ENCODE measurements at regions of chr17 and their contacts with region 1.

Region 1: DNA sequence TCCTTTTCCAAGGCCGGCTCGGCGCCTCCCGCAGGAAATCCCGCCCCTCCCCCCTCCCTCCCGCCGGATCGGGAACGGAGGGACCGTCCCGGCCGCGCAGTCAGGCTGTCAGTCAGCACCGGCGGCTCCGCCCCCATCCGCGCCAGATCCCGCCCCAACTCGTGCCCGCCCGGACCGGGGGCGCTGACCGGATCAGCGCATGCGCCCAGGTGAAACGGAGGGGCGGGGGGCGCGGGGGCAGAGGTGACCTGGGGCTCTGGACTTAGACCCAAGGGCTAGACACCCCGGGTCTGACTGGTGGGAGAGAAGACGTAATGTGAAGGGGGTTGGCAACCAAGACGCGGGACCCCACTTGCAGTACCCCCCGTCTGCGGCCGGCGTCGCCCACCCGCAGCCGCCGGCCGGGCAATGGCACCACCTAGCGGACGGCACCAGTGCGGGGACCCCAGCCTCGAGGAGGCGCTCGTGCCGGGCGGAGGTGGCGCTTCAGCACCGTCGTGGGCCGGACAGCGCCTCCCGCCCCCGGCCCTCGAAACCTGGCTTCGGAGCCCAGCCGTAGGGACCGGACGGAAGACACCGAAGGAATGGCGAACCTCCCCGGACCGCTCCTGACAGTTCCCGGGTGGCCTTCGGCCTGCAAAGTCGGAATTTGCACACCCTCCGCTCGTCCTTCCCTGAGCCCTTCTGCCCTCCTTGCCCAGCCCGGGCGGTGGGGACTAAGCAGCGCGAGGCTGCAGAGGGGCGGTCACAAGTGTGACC is at the start of gene CASKIN2:
- DNase-seq: peak; percentile 83
- ATAC-seq: peak; percentile 54
- H3K4me3 Mint-ChIP-seq: peak within 1 kb of the TSS; percentile 76
- H3K27ac Mint-ChIP-seq: peak within 1 kb of the TSS; percentile 52
- H3K4me1 Mint-ChIP-seq: peaks cover 28% of the 10 kb centered on the region
- H3K27me3 Mint-ChIP-seq: peaks cover 3% of the 10 kb centered on the region
- total RNA-seq, gene CASKIN2: 0.68 to 0.97 TPM

Region 2: DNA sequence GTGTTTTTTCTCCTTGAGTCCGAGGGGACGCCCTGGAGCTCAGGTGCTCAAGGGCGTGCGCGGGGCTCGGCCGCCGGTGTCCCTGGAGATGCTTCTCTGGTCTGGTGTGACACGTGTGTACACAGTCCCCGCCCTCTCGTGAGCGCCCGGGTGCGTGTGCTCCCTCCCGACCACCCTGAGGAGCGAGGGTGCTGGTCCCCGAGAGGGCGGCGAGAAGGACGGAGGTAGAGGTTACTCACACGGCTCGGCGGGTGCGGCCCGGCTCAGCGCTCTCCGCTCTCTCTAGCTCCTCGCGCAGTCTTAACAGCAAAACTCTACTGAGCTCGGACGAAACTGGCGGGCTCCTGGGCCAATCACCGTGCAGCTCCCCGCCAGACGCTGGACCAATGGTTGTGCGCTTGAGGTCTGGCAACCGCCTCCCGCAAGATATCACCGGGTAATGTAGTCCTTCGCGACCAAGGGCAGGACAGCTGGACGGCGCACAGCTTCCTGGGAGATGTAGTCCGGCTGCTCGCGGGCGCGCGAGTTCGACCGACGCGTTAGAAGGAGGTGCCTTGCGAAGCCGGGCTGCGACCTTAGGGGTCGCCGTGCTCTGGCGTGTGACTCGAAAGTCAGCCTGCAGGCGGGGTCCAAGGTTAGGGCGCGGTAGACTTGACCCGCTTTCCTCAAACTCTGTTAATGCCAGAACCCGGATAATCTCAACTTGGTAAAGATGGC is 226.4 kb before region 1 on chr17 and contains the start of gene SLC25A19:
- CTCF ChIA-PET with region 1: interaction called, 19 read pairs
- POLR2A ChIA-PET with region 1: interaction called, 5 read pairs
- DNase-seq: peak; percentile 99
- ATAC-seq: peak; percentile 92
- H3K4me3 Mint-ChIP-seq: peak within 1 kb of the TSS; percentile 97
- H3K27ac Mint-ChIP-seq: peak within 1 kb of the TSS; percentile 100
- H3K4me1 Mint-ChIP-seq: peaks cover 27% of the 10 kb centered on the region
- H3K27me3 Mint-ChIP-seq: no peaks in the 10 kb centered on the region
- total RNA-seq, gene SLC25A19: 41.1 to 43.6 TPM

Region 3: GRCh38 chr17:75456417-75457046 is 59.1 kb before region 1 on chr17 and contains the start of gene TMEM94:
- CTCF ChIA-PET with region 1: interaction called, 17 read pairs
- POLR2A ChIA-PET with region 1: interaction called, 14 read pairs
- DNase-seq: peak; percentile 96
- ATAC-seq: peak; percentile 98
- H3K4me3 Mint-ChIP-seq: peak within 1 kb of the TSS; percentile 87
- H3K27ac Mint-ChIP-seq: peak within 1 kb of the TSS; percentile 93
- H3K4me1 Mint-ChIP-seq: peaks cover 43% of the 10 kb centered on the region
- H3K27me3 Mint-ChIP-seq: no peaks in the 10 kb centered on the region
- total RNA-seq, gene TMEM94: 81.9 to 84.8 TPM

Region 4: DNA sequence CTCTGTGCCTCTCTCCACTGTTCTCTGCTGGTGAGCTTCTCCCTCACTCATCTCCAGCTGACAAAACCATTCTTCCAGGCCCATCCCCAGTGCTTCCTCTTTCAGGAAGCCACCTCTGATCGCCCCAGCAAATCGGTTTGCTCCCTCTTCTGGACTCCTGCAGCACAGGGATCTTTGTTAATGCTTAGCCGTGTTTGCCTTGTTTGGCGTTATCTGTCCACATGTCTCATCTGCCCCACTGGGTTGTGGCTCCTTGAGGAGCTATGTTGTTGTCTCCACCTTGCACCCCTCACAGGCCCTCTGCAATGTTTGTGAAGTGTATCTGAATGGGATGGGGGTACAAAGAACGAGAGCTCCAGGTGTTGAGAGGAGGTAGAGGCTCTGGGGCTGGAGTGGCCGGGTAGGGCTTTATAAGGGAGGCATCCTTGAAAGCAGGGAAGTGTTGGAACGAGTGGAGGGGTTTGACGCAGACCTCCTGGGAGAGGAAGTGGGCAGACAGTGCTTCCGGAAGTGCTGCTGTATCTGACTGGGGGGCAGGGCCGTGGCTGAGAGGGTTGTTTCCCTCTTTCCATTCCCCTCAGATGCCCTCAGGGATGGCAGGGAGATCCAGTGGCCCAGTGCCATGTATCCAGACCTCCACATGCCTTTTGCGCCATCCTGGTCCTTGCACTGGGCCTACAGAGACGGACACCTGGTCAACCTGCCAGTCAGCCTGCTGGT is 28.2 kb before region 1 on chr17:
- CTCF ChIA-PET with region 1: interaction called, 16 read pairs
- POLR2A ChIA-PET with region 1: interaction called, 6 read pairs
- DNase-seq: peak; percentile 80
- ATAC-seq: peak; percentile 89
- H3K4me3 Mint-ChIP-seq: peak overlapping the region; percentile 67
- H3K27ac Mint-ChIP-seq: peak overlapping the region; percentile 98
- H3K4me1 Mint-ChIP-seq: peaks cover 30% of the 10 kb centered on the region
- H3K27me3 Mint-ChIP-seq: no peaks in the 10 kb centered on the region

Region 5: GRCh38 chr17:75535119-75535537 is 19.5 kb after region 1 on chr17:
- CTCF ChIA-PET with region 1: interaction called, 26 read pairs
- POLR2A ChIA-PET with region 1: interaction called, 15 read pairs
- DNase-seq: peak; percentile 86
- ATAC-seq: peak; percentile 97
- H3K4me3 Mint-ChIP-seq: peak overlapping the region; percentile 27
- H3K27ac Mint-ChIP-seq: peak overlapping the region; percentile 92
- H3K4me1 Mint-ChIP-seq: peaks cover 31% of the 10 kb centered on the region
- H3K27me3 Mint-ChIP-seq: no peaks in the 10 kb centered on the region

Region 6: DNA sequence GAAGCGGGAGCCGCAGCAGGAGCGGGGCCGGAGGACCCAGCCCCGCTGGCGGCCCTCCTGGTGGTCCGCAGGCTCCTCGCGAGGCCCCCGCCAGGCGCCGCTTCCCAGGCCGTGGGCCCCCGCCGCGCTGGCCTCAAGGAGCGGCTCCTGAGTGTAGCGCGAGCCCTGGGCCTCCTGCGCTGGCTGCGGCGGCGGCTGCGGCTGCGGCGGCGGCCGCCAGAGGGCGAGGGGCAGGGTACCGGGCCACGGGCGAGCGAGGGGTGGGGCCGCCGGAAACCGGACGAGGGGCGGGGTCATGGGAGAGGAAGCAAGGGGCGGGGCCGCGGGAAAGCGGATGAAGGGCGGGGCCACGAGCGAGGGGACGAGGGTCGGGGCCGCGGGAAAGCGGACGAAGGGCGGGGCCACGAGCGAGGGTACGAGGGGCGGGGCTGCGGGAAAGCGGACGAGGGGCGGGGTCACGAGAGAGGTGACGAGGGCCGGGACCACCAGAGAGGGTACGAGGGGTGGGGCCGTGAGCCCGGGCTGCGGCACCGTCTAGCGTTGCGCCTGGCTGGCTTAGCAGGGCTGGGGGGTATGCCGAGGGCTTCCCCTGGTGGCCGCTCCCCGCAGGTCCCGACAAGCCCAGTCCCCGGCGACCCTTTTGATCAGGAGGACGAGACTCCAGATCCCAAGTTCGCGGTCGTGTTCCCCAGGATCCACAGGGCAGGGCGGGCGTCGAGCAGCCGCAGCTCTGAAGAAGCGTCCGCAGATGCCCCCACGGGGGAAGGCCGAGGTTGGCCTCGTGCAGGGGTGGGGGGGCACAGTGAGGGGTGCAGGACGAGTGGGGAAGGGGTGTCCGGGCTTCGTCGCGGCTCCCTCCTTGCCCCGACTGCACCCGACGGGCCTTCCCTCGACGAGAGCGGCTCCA is 73.6 kb after region 1 on chr17:
- CTCF ChIA-PET with region 1: interaction called, 13 read pairs
- POLR2A ChIA-PET with region 1: interaction called, 8 read pairs
- DNase-seq: peak; percentile 98
- ATAC-seq: peak; percentile 85
- H3K4me3 Mint-ChIP-seq: peak overlapping the region; percentile 61
- H3K27ac Mint-ChIP-seq: peak overlapping the region; percentile 82
- H3K4me1 Mint-ChIP-seq: peaks cover 24% of the 10 kb centered on the region
- H3K27me3 Mint-ChIP-seq: peaks cover 18% of the 10 kb centered on the region

Measured in activated CD8-positive, alpha-beta T cell treated with anti-CD3 and anti-CD28 coated beads, Interleukin-2, amount 10 ng/mL, durations not matched to agents 7 days and 5 days (primary cell).